Activated CD4-positive, alpha-beta T cell treated with anti-CD3 and anti-CD28 coated beads for 36 hours (primary cell): ENCODE measurements at regions of chr1 and their contacts with region 1.

Region 1: GRCh38 chr1:190344454-190344853 is 133.2 kb downstream of the BRINP3 start:
- DNase-seq: no peak
- ATAC-seq: no peak
- H3K4me3 Mint-ChIP-seq: no peak overlapping the region
- H3K27ac Mint-ChIP-seq: no peak overlapping the region
- H3K4me1 Mint-ChIP-seq: no peaks in the 10 kb centered on the region
- H3K27me3 Mint-ChIP-seq: no peaks in the 10 kb centered on the region

Region 2: GRCh38 chr1:190391582-190391981 is 47.1 kb after region 1 on chr1:
- CTCF ChIA-PET with region 1: no interaction called
- POLR2A ChIA-PET with region 1: no interaction called
- intact Hi-C with region 1: loop called in 1 of 2 experiments (anchors 1 kb)
- DNase-seq: no peak
- ATAC-seq: no peak
- H3K4me3 Mint-ChIP-seq: no peak overlapping the region
- H3K27ac Mint-ChIP-seq: no peak overlapping the region
- H3K4me1 Mint-ChIP-seq: no peaks in the 10 kb centered on the region
- H3K27me3 Mint-ChIP-seq: no peaks in the 10 kb centered on the region